ENCODE measurements at regions of chr19 and their contacts with region 1.

Region 1: GRCh38 chr19:54805665-54806515 is 2.5 kb downstream of the KIR2DL4 start:
- DNase-seq: no peak
- H3K4me3 ChIP-seq: no peak overlapping the region
- H3K27ac ChIP-seq: no peak overlapping the region
- H3K4me1 ChIP-seq: no peaks in the 10 kb centered on the region
- H3K27me3 ChIP-seq: no peaks in the 10 kb centered on the region
- CTCF ChIP-seq: no peak

Region 2: DNA sequence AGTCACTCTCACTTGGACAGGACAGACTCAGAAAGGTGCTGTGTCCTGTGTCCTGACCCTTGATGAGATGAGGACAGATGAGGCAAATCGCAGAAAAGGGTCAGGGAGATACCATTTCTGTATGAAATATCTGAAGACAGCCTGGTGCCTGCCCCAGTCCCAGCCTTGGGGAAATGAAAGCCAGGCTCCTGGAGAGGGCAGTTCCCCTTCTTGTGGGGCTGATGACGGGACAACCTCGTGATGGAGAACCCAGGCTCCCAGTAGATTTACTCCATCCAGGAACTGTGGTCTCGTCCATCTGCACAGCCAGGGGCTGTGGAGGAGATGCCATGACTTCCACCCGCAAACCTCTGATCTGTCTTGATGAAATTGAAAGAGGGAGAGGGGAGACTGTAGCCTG is 161.8 kb before region 1 on chr19:
- CTCF ChIA-PET with region 1: no interaction called
- dilution Hi-C with region 1: no loop called
- in situ Hi-C with region 1: no loop called
- intact Hi-C with region 1: no loop called
- DNase-seq: no peak
- H3K4me3 ChIP-seq: no peak overlapping the region
- H3K27ac ChIP-seq: no peak overlapping the region
- H3K4me1 ChIP-seq: no peaks in the 10 kb centered on the region
- H3K27me3 ChIP-seq: no peaks in the 10 kb centered on the region
- CTCF ChIP-seq: no peak

Region 3: GRCh38 chr19:54873990-54874389 is 68.1 kb after region 1 on chr19 and contains the start of gene FCAR:
- CTCF ChIA-PET with region 1: no interaction called
- dilution Hi-C with region 1: loop called (anchors 5 kb)
- in situ Hi-C with region 1: no loop called
- intact Hi-C with region 1: no loop called
- DNase-seq: no peak
- H3K4me3 ChIP-seq: no peak within 1 kb of the TSS
- H3K27ac ChIP-seq: no peak within 1 kb of the TSS
- H3K4me1 ChIP-seq: no peaks in the 10 kb centered on the region
- H3K27me3 ChIP-seq: no peaks in the 10 kb centered on the region
- CTCF ChIP-seq: no peak
- total RNA-seq, gene FCAR: not detected